ENCODE measurements at regions of chr16 and their contacts with region 1.

Region 1: GRCh38 chr16:69330286-69331109 is at the start of gene PDF:
- DNase-seq: peak; percentile 77 to 88 (median 83)
- H3K4me3 ChIP-seq: peak within 1 kb of the TSS; percentile 76
- H3K4me3 Mint-ChIP-seq: peak within 1 kb of the TSS; percentile 79 to 87 (median 81)
- H3K27ac ChIP-seq: peak within 1 kb of the TSS; percentile 76
- H3K27ac Mint-ChIP-seq: peak within 1 kb of the TSS; percentile 74 to 88 (median 80)
- H3K4me1 ChIP-seq: peaks cover 50% of the 10 kb centered on the region
- H3K4me1 Mint-ChIP-seq: peaks cover 38 to 73% (median 46%) of the 10 kb centered on the region in 3 donors
- H3K27me3 ChIP-seq: no peaks in the 10 kb centered on the region
- H3K27me3 Mint-ChIP-seq: no peaks in the 10 kb centered on the region
- total RNA-seq, gene PDF: 29.1 to 34.9 TPM

Region 2: DNA sequence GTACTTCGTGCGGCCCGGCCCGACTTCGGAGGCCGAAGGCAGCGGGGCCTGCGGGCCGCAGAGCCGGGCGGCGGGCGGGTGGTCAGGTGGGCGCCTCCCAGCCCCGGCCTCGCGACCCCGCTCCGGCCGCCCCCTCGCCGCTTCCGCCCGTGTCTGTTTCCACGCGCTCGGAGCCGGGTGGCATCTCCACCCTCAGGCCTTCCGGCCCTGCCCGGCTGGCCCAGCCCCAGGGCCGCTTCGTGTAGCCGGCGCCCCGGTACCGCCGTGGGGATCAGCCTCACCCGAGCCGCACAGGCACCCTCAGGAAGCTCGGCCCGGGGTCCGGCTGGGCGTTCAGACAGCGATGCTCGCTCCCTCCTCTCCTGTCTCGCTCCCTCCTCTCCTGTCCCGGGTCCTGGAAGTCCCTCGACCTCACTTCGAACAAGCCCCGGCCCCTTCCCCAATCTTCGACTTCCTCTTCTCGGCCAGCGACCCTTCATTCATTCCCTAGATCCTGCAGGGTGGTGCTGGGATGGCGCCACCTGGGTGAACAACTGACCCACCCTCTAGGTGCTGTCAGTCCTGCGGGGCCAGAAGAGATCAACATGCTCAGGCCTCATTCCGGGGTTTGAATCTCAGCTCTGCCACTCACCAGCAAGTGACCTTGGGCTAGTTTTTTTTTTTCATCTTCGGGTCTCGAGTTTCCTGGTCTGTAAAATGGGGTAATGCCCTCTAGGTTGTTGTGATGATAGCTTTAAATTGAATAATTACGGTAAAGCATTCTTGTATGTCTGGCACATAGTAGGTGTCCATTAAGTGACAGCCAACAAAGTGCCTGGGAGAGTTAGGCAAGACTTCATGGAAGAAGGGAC is 18.7 kb before region 1 on chr16:
- CTCF ChIA-PET with region 1: interaction called, 7 read pairs
- POLR2A ChIA-PET with region 1: interaction called, 12 read pairs
- DNase-seq: peak in 2 of 5 donors; percentile 21 to 28
- H3K4me3 ChIP-seq: peak overlapping the region; percentile 73
- H3K4me3 Mint-ChIP-seq: peak overlapping the region; percentile 95 to 99 (median 98)
- H3K27ac ChIP-seq: peak overlapping the region; percentile 81
- H3K27ac Mint-ChIP-seq: peak overlapping the region; percentile 89 to 99 (median 96)
- H3K4me1 ChIP-seq: peaks cover 10% of the 10 kb centered on the region
- H3K4me1 Mint-ChIP-seq: peaks cover 25 to 42% (median 34%) of the 10 kb centered on the region in 3 donors
- H3K27me3 ChIP-seq: no peaks in the 10 kb centered on the region
- H3K27me3 Mint-ChIP-seq: no peaks in the 10 kb centered on the region